ENCODE measurements at regions of chr1 and their contacts with region 1.

Region 1: DNA sequence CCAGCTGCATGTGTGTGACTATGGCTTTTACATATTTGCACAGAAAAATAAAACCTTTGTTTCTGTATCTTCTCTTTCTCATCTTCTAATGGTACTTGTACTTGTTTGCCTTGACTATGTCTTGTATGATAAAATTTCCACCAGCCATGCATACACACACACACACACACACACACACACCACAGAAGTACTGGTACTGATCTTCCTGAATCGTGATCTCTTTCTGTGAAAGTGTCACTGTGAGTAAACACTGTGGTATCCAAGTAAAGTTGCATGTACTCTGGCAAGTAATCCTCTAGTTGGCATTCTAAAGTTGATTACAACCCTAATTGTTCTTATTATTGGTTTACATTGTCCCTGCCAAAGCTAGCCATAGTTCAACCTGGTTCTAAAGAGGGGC is 176.7 kb downstream of the CRB1 start:
- DNase-seq: no peak
- ATAC-seq: no peak
- H3K4me3 ChIP-seq: no peak overlapping the region
- H3K27ac ChIP-seq: no peak overlapping the region
- H3K4me1 ChIP-seq: no peaks in the 10 kb centered on the region
- H3K27me3 ChIP-seq: no peaks in the 10 kb centered on the region
- CTCF ChIP-seq: no peak

Region 2: DNA sequence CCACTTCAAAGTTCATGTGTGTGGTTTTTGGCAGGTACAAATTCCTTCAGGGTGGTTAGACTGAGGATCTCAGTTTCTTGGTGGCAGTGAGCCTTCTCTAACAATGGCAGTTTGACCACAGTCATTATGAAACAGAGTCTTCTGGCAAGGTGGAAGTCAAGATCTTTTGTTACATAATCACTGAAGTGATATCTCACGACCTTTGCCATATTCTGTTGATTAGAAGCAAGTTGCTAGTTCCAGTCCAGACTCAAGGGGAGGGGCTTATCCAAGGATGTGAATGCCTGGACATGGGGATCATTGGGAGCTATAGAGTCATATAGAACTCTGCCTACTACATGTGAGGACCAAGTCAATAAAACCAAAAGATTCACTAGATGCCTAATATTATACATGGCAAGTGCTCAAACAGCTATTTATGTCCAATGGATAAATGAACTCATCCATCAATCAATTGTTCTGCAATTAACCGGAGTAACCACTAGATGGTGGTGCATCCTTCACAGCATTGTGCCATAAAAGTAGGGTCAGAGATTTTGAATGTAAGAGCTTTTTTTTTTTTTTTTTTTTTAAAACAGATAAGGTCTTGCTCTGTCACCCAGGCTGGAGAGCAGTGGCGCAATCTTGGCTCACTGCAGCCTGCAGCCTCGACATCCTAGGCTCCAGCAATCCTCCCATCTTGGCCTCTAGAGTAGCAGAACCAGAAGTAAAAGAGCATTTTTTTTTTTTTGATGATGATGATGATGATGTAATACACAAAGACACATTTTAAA is 44.8 kb before region 1 on chr1:
- CTCF ChIA-PET with region 1: interaction called, 12 read pairs
- POLR2A ChIA-PET with region 1: no interaction called
- in situ Hi-C with region 1: no loop called
- intact Hi-C with region 1: no loop called
- DNase-seq: peak; percentile 12
- ATAC-seq: no peak
- H3K4me3 ChIP-seq: no peak overlapping the region
- H3K27ac ChIP-seq: no peak overlapping the region
- H3K4me1 ChIP-seq: no peaks in the 10 kb centered on the region; the same call in 1 of the 2 replicates
- H3K27me3 ChIP-seq: no peaks in the 10 kb centered on the region
- CTCF ChIP-seq: peak; percentile 82